ENCODE measurements at regions of chr15 and their contacts with region 1.

Region 1: GRCh38 chr15:57640935-57641682 is 49.4 kb downstream of the MYZAP start:
- H3K4me3 ChIP-seq: no peak overlapping the region
- H3K27ac ChIP-seq: no peak overlapping the region
- H3K4me1 ChIP-seq: no peaks in the 10 kb centered on the region
- CTCF ChIP-seq: no peak

Region 2: GRCh38 chr15:57561041-57561711 is 79.9 kb before region 1 on chr15:
- CTCF ChIA-PET with region 1: interaction called, 10 read pairs
- POLR2A ChIA-PET with region 1: no interaction called
- H3K4me3 ChIP-seq: no peak overlapping the region
- H3K27ac ChIP-seq: no peak overlapping the region
- H3K4me1 ChIP-seq: no peaks in the 10 kb centered on the region
- CTCF ChIP-seq: peak; percentile 61

Region 3: DNA sequence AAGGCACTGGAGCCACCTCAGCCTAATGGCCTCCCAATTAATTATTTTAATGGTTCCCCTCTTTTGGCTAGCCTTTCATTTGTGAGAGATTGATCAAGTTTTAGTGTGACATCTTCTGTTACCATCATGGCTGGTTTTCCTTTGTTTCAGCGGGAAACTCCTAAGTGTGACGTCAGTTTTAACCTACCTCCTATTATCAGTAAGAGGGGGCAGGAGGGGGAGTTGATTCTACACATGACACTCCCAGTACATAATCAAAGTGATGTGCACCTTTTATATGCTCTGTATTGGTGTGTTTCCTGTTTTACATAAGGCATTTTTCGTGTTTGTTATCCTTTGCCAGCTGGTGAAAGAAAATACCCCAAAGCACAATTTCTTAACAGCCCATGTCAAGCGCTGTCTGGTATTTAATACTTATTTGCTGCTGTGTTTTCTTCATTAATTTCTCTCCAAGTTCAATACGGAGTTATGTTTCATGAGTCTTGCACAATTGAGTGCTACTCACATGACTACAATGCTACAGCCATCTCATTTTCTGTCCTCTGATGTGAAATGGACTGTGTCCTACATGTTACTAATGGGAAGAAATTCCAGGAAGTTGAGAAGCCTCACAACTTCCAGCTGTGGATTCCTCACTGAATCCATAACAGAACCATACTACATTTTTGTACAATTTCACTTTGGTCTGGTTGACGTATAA is 13.2 kb after region 1 on chr15:
- CTCF ChIA-PET with region 1: interaction called, 17 read pairs
- POLR2A ChIA-PET with region 1: no interaction called
- H3K4me3 ChIP-seq: no peak overlapping the region
- H3K27ac ChIP-seq: no peak overlapping the region
- H3K4me1 ChIP-seq: no peaks in the 10 kb centered on the region
- CTCF ChIP-seq: no peak

Region 4: GRCh38 chr15:57769266-57769665 is 128.2 kb after region 1 on chr15:
- CTCF ChIA-PET with region 1: no interaction called
- POLR2A ChIA-PET with region 1: no interaction called
- H3K4me3 ChIP-seq: no peak overlapping the region
- H3K27ac ChIP-seq: no peak overlapping the region
- H3K4me1 ChIP-seq: no peaks in the 10 kb centered on the region
- CTCF ChIP-seq: no peak

Region 5: DNA sequence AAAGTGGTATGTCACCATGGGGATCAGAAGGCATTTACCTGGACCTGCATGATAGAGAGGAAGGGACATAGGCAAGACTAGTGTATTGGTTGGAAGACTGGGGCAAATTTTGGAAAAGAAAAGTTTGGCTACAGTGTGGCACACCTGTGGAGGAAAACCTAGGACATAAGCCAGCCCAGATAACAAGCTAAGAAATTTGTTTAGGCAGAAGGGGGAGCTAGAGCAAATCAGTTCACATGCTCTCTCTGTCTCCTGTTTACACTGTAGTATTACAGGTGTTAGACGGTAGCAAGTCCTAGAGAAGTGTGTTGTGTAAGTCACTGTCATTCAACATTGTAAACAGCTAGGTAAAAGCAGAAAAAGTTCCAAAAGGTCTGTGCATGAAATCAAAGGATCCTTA is 436.3 kb after region 1 on chr15:
- CTCF ChIA-PET with region 1: no interaction called
- POLR2A ChIA-PET with region 1: no interaction called
- H3K4me3 ChIP-seq: no peak overlapping the region
- H3K27ac ChIP-seq: no peak overlapping the region
- H3K4me1 ChIP-seq: no peaks in the 10 kb centered on the region
- CTCF ChIP-seq: 0 out of 2 replicates have a peak, but pooled peaks have one; percentile 41